Activated CD4-positive, alpha-beta T cell treated with anti-CD3 and anti-CD28 coated beads for 36 hours (primary cell): ENCODE measurements at regions of chr1 and their contacts with region 1.

Region 1: GRCh38 chr1:24385160-24385940 is 28.2 kb downstream of the STPG1 start:
- DNase-seq: peak; percentile 69
- ATAC-seq: peak; percentile 57
- H3K4me3 Mint-ChIP-seq: no peak overlapping the region
- H3K27ac Mint-ChIP-seq: peak overlapping the region; percentile 55
- H3K4me1 Mint-ChIP-seq: peaks cover 29% of the 10 kb centered on the region
- H3K27me3 Mint-ChIP-seq: no peaks in the 10 kb centered on the region

Region 2: GRCh38 chr1:23867953-23868556 is 517.3 kb before region 1 on chr1 and contains the start of gene FUCA1:
- CTCF ChIA-PET with region 1: no interaction called
- POLR2A ChIA-PET with region 1: no interaction called
- intact Hi-C with region 1: no loop called
- DNase-seq: peak; percentile 95
- ATAC-seq: peak; percentile 97
- H3K4me3 Mint-ChIP-seq: peak within 1 kb of the TSS; percentile 76
- H3K27ac Mint-ChIP-seq: peak within 1 kb of the TSS; percentile 77
- H3K4me1 Mint-ChIP-seq: peaks cover 19% of the 10 kb centered on the region
- H3K27me3 Mint-ChIP-seq: no peaks in the 10 kb centered on the region
- total RNA-seq, gene FUCA1: 4.2 to 4.5 TPM

Region 3: GRCh38 chr1:24321697-24322469 is 63.5 kb before region 1 on chr1:
- CTCF ChIA-PET with region 1: interaction called, 15 read pairs
- POLR2A ChIA-PET with region 1: interaction called, 3 read pairs
- intact Hi-C with region 1: loop called in 1 of 2 experiments (anchors 2 kb)
- DNase-seq: peak; percentile 87
- ATAC-seq: peak; percentile 76
- H3K4me3 Mint-ChIP-seq: peak overlapping the region; percentile 62
- H3K27ac Mint-ChIP-seq: peak overlapping the region; percentile 51
- H3K4me1 Mint-ChIP-seq: peaks cover 40% of the 10 kb centered on the region
- H3K27me3 Mint-ChIP-seq: peaks cover 70% of the 10 kb centered on the region

Region 4: GRCh38 chr1:24351918-24352627 is 33.3 kb before region 1 on chr1:
- CTCF ChIA-PET with region 1: interaction called, 14 read pairs
- POLR2A ChIA-PET with region 1: no interaction called
- intact Hi-C with region 1: loop called (anchors 1 kb)
- DNase-seq: peak; percentile 92
- ATAC-seq: peak; percentile 72
- H3K4me3 Mint-ChIP-seq: no peak overlapping the region
- H3K27ac Mint-ChIP-seq: peak overlapping the region; percentile 79
- H3K4me1 Mint-ChIP-seq: peaks cover 39% of the 10 kb centered on the region
- H3K27me3 Mint-ChIP-seq: no peaks in the 10 kb centered on the region